Esophagus muscularis mucosa (tissue), 4 donors: ENCODE measurements at regions of chr4 and their contacts with region 1.

Region 1: DNA sequence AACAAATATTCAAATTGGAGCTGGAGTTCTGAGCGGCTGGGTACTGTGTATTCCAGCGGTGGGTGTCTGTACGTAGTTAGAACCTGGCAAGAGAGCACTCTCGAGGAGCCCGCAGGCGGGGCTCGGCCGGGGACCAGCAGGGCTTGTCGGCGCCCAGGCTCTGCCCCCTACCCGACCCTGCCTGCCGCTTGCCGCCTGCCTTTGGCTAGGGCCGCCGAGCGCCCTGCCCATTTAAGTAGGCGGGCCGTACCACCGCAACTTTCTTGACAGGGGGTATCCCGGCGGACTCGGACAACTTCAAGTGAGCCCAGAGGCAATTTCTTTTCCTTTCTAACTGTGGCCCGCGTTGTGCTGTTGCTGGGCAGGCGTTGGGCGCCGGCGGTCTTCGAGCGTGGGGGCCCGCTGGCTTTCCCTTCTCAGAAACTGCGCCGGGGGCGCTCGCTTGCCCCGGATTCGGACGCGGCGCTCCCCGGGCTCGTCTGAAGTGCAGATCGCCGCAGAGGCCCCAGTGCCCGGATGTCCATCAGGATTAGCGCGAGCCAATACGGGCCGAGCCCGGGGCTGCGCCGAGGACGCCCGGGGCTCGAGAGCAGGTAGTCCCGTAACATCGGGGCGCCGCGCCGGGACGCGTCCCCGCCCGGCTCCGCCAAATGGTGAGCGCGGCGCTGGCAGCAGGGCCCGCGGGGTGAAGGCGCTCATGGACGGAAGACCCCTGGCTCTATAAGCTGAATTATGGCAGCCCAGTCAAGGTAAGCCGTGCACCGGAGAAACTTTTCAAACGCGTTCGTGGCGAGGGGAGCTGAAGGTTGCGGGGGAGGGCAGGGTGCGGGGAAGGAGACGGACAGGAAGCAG is 72.1 kb downstream of the AFF1 start:
- DNase-seq: peak; percentile 98
- H3K4me3 ChIP-seq: peak overlapping the region; percentile 69 to 92 (median 77)
- H3K27ac ChIP-seq: peak overlapping the region; percentile 92 to 97 (median 94)
- H3K4me1 ChIP-seq: peaks cover 37 to 55% (median 49%) of the 10 kb centered on the region in 4 donors
- H3K27me3 ChIP-seq: no peaks in the 10 kb centered on the region
- CTCF ChIP-seq: peak in 2 of 3 experiments; percentile 3 to 13
- EP300 ChIP-seq: no peak
- POLR2A ChIP-seq: peak; percentile 96

Region 2: DNA sequence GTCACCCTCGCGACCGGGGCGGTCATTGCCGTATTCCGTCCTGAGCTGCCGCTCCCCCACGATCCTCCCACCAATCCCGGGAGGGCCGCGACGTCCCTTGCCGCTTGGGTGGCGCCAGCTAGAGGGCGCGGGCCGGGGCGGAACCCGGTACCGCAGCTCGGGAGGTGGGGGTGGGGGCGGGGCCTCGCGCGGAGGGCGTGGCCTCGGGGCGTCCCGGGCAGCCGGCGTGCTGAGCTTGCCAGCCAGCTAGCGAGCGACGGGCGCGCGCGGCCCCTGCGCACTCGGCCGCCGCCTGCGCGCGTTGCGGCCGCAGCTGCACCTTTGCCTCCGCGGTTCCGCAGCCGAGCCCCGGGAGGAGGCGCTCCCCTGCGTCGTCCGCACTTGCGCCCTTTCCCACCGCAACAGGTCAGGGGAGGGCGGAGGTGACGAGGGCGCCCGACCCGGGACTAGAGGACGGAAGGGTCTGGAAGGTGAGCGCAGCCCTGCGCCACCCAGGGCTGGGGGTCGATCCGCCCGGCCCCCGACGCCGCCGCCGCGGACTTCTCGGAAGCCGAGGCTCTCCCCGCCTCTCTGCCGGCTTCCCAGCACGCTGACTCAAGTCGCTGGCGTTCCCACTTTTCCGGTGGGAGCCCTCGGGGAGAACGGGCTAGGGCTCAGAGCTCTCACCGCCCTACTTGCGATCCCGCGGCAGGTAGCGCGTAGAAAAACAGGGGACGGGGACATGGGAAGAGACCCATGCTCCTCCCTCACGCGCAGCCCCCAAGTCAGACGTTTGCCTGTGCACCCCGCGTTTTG is 71.9 kb before region 1 on chr4 and contains the start of gene AFF1:
- intact Hi-C with region 1: loop called (anchors 2 kb)
- DNase-seq: peak; percentile 97
- H3K4me3 ChIP-seq: peak within 1 kb of the TSS; percentile 94 to 99 (median 97)
- H3K27ac ChIP-seq: peak within 1 kb of the TSS; percentile 97 to 99 (median 99)
- H3K4me1 ChIP-seq: peaks cover 25 to 55% (median 47%) of the 10 kb centered on the region in 4 donors
- H3K27me3 ChIP-seq: peaks cover 0 to 3% (median 0%) of the 10 kb centered on the region in 4 donors
- CTCF ChIP-seq: peak; percentile 56 to 68 (median 61)
- EP300 ChIP-seq: peak; percentile 65
- POLR2A ChIP-seq: peak; percentile 78
- total RNA-seq, gene AFF1: 53.6 to 85.2 (median 70.6) TPM

Region 3: GRCh38 chr4:87081826-87082225 is 74.9 kb after region 1 on chr4:
- intact Hi-C with region 1: loop called (anchors 5 kb)
- DNase-seq: no peak
- H3K4me3 ChIP-seq: no peak overlapping the region
- H3K27ac ChIP-seq: peak overlapping the region; percentile 79 to 84 (median 82)
- H3K4me1 ChIP-seq: peaks cover 68 to 86% (median 80%) of the 10 kb centered on the region in 4 donors
- H3K27me3 ChIP-seq: no peaks in the 10 kb centered on the region
- CTCF ChIP-seq: no peak
- EP300 ChIP-seq: no peak
- POLR2A ChIP-seq: no peak